PC-9 (cell line): ENCODE measurements at regions of chr13 and their contacts with region 1.

Region 1: GRCh38 chr13:50107205-50107604 is 92.0 kb downstream of the KCNRG start:
- DNase-seq: no peak
- H3K4me3 ChIP-seq: no peak overlapping the region
- H3K27ac ChIP-seq: no peak overlapping the region
- H3K4me1 ChIP-seq: peaks cover 20% of the 10 kb centered on the region
- H3K27me3 ChIP-seq: no peaks in the 10 kb centered on the region
- CTCF ChIP-seq: no peak

Region 2: DNA sequence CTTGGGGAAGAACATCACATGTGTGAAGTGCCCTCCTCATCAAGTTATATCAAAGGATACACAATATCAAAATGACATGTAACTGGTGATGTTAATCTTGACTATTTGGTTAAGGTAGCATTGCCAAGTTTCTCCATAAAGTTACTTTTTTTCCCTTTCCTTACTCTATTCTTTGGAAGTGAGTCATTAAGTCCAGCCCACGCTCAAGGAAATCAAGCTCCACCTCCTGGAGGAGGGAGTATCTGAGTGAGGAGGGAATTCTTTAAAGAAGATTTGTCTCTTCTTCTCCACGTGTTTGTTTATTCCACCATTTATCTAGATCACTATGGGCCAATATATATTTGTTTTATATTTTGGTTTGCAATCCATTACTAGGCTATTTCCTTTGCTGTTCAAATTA is 1165.1 kb before region 1 on chr13:
- CTCF ChIA-PET with region 1: no interaction called
- POLR2A ChIA-PET with region 1: no interaction called
- intact Hi-C with region 1: no loop called
- DNase-seq: no peak
- H3K4me3 ChIP-seq: no peak overlapping the region
- H3K27ac ChIP-seq: no peak overlapping the region
- H3K4me1 ChIP-seq: no peaks in the 10 kb centered on the region
- H3K27me3 ChIP-seq: no peaks in the 10 kb centered on the region
- CTCF ChIP-seq: no peak

Region 3: GRCh38 chr13:50123862-50124536 is 16.8 kb after region 1 on chr13:
- CTCF ChIA-PET with region 1: no interaction called
- POLR2A ChIA-PET with region 1: no interaction called
- intact Hi-C with region 1: loop called (anchors 1 kb)
- DNase-seq: peak; percentile 82 to 93
- H3K4me3 ChIP-seq: peak overlapping the region; percentile 91
- H3K27ac ChIP-seq: peak overlapping the region; percentile 80
- H3K4me1 ChIP-seq: peaks cover 24% of the 10 kb centered on the region
- H3K27me3 ChIP-seq: no peaks in the 10 kb centered on the region
- CTCF ChIP-seq: no peak

Region 4: GRCh38 chr13:50377726-50378270 is 270.6 kb after region 1 on chr13:
- CTCF ChIA-PET with region 1: no interaction called
- POLR2A ChIA-PET with region 1: interaction called, 24 read pairs
- intact Hi-C with region 1: no loop called
- DNase-seq: no peak
- H3K4me3 ChIP-seq: no peak overlapping the region
- H3K27ac ChIP-seq: no peak overlapping the region
- H3K4me1 ChIP-seq: no peaks in the 10 kb centered on the region
- H3K27me3 ChIP-seq: no peaks in the 10 kb centered on the region
- CTCF ChIP-seq: no peak